ENCODE measurements at regions of chr1 and their contacts with region 1.

Region 1: DNA sequence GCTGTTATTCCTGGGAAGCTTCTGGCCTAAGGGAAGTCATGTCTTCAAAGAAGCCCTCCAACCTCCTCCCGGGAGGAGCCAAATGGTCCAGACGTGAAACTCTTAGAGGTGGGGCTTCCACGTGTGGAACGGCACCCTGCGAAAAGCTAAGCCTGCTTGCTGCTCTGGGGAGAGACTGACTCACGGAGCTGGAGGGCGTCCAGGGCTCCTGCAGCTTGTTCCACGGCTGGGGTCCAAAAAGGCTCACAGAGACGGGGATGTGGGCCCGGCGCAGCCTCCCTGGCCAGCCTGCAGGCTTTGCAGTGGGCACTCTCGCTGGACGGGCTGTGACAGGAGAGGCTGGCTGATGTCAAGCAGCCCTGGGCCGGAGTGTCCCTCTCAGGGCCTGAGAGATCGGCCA is 105.1 kb downstream of the COLGALT2 start:
- DNase-seq: peak in 1 of 2 experiments; percentile 41
- H3K4me3 ChIP-seq: no peak overlapping the region
- H3K27ac ChIP-seq: no peak overlapping the region
- H3K4me1 ChIP-seq: no peaks in the 10 kb centered on the region
- H3K27me3 ChIP-seq: no peaks in the 10 kb centered on the region
- CTCF ChIP-seq: no peak
- EP300 ChIP-seq: no peak
- POLR2A ChIP-seq: no peak
- RAD21 ChIP-seq: no peak

Region 2: DNA sequence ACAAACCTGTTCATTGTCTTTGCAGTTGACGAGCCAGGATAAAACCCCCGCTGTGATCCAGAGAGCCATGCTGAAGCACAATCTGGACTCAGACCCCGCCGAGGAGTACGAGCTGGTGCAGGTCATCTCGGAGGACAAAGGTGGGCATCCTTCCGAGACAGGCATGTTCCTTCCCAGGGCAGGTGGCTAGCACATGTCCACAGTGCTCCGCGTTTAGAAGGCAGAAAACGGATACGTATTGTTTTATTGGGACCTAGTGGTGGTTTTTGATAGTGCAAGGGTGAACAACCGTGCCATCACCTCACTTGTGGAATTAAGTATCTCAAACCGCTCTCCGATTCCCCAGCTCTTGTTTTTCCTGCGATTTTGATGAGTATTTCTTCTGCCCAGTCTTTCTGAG is 10.2 kb before region 1 on chr1:
- CTCF ChIA-PET with region 1: interaction called, 21 read pairs
- POLR2A ChIA-PET with region 1: no interaction called
- DNase-seq: no peak
- H3K4me3 ChIP-seq: no peak overlapping the region
- H3K27ac ChIP-seq: no peak overlapping the region
- H3K4me1 ChIP-seq: no peaks in the 10 kb centered on the region; a peak in 1 of 7 replicates
- H3K27me3 ChIP-seq: no peaks in the 10 kb centered on the region
- CTCF ChIP-seq: peak in 2 of 3 experiments; percentile 7 to 40; a peak in 1 of 4 replicates
- EP300 ChIP-seq: no peak
- POLR2A ChIP-seq: no peak
- RAD21 ChIP-seq: no peak; a peak in 1 of 4 replicates

Region 3: GRCh38 chr1:183947988-183948387 is 15.6 kb after region 1 on chr1:
- CTCF ChIA-PET with region 1: no interaction called
- POLR2A ChIA-PET with region 1: no interaction called
- DNase-seq: no peak
- H3K4me3 ChIP-seq: no peak overlapping the region
- H3K27ac ChIP-seq: no peak overlapping the region
- H3K4me1 ChIP-seq: peaks cover 4 to 10% (median 5%) of the 10 kb centered on the region in 4 experiments; a peak in 6 of 7 replicates
- H3K27me3 ChIP-seq: peaks cover 0 to 32% (median 28%) of the 10 kb centered on the region in 4 experiments; a peak in 6 of 7 replicates
- CTCF ChIP-seq: no peak
- EP300 ChIP-seq: no peak
- POLR2A ChIP-seq: no peak
- RAD21 ChIP-seq: no peak

Measured in H1 (cell line).